Sigmoid colon (tissue), 7 donors: ENCODE measurements at regions of chr3 and their contacts with region 1.

Region 1: GRCh38 chr3:37899101-37899707 is 37.5 kb downstream of the CTDSPL start:
- DNase-seq: no peak
- H3K4me3 ChIP-seq: no peak overlapping the region
- H3K27ac ChIP-seq: peak overlapping the region in 1 of 4 donors; percentile 50
- H3K4me1 ChIP-seq: peaks cover 0 to 71% (median 36%) of the 10 kb centered on the region in 4 donors
- H3K27me3 ChIP-seq: no peaks in the 10 kb centered on the region
- CTCF ChIP-seq: no peak
- EP300 ChIP-seq: no peak
- POLR2A ChIP-seq: no peak

Region 2: GRCh38 chr3:37944391-37944842 is 45.2 kb after region 1 on chr3:
- intact Hi-C with region 1: loop called (anchors 5 kb)
- DNase-seq: no peak
- H3K4me3 ChIP-seq: no peak overlapping the region
- H3K27ac ChIP-seq: peak overlapping the region; percentile 56 to 78 (median 68)
- H3K4me1 ChIP-seq: peaks cover 0 to 74% (median 69%) of the 10 kb centered on the region in 4 donors
- H3K27me3 ChIP-seq: no peaks in the 10 kb centered on the region
- CTCF ChIP-seq: no peak
- EP300 ChIP-seq: no peak
- POLR2A ChIP-seq: no peak